Motor neuron (in vitro differentiated cells): ENCODE measurements at regions of chr7 and their contacts with region 1.

Region 1: DNA sequence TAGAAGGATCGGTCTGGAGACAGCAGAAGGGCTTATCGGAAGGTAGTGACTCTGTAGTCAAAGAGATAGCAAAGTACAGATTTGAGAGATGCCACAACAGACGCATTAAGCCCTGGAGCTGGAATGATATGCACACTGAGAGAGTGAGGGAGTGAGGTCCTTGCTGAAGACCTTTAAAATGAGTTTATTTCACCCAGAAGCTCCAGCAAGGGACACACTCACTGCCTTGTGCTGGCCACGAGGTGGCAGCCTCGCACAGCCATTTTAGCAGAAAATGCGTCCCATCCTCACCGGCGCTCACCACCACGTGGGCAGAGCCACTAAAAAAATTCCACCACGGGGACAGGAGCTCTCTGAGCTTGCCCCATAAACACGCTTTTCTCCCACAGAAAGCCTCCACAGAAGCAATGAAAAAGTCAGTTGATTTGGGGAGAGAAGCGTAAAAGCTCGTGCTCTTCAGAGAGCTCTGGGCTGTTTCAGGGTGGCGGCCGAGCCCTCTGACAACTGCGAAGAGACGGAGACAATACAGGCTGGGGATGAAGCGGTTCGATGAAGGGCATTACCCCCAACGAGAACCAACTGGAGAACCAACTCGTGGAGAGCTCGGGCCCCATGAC is 163.0 kb upstream of the KLF14 start:
- ATAC-seq: peak; percentile 30 to 90 (median 81)
- H3K4me3 ChIP-seq: no peak overlapping the region
- H3K27ac ChIP-seq: no peak overlapping the region
- H3K4me1 ChIP-seq: peaks cover 0 to 4% of the 10 kb centered on the region in 2 donors

Region 2: DNA sequence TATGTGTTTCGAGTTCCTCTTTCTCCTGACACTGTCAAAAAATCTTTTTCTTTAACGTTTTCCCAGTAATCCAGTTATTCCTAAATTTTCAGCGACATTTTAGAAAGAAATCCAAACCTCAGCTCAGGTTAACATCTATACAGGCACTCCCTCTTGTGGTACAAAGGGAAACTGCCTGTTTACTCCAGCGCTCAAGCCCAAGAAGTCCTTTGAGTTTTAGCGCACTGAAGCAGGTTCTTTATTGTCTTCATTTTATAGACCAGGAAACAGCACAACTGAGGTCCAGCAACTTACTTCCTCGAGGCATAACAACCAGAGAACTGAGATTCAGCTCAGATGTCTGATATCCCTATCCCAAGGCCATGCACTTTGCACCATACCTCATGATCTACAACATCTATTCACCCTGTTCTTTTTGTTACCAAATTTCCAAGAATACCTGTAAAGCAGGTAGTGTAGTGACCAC is 143.5 kb after region 1 on chr7:
- in situ Hi-C with region 1: loop called in 2 of 9 experiments (anchors 25 kb)
- ATAC-seq: peak in 6 of 8 experiments; percentile 20 to 77 (median 49)
- H3K4me3 ChIP-seq: no peak overlapping the region
- H3K27ac ChIP-seq: no peak overlapping the region
- H3K4me1 ChIP-seq: no peaks in the 10 kb centered on the region

Region 3: GRCh38 chr7:131071786-131072504 is 174.9 kb after region 1 on chr7:
- in situ Hi-C with region 1: no loop called
- ATAC-seq: peak; percentile 24 to 88 (median 75)
- H3K4me3 ChIP-seq: no peak overlapping the region
- H3K27ac ChIP-seq: no peak overlapping the region
- H3K4me1 ChIP-seq: peaks cover 0 to 6% of the 10 kb centered on the region in 2 donors